ENCODE measurements at regions of chr10 and their contacts with region 1.

Region 1: DNA sequence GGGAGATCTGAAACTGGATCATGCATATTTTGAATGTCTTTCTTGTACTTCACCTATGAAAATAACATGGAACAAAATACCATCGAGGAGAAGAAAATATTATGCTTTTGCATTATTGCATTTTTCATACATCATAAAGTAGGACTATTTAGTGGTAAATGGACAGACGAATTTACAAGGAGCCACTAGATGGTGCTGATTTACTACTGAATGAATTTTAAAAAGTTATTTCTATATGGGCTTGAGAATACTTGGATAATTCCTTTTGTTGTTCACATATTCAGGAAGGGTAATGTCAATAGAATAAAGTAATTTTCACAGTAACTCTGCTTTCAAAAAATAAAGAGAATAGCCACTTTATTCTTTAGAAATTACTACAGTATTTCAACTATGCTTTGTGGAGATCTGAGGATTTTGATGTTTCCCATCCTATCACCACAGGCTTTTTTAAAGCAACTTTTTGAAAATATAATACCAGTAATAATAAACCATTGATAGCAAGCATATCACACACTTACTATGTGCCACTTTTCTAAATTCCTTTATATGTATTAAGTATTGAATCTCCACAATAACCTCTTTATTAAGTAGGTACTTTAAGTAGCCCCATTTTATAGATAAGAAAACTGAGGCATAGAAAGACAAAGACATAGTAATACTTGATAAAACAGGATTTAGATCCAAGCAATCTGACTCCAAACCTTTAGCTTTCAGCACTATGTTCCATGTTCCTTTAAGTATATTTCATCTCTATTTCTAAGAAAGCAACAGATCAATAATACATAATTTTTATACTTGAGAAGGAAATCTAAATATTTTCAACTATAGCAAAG is 38.6 kb downstream of the NEBL start:
- DNase-seq: peak; percentile 49
- H3K4me3 ChIP-seq: no peak overlapping the region
- H3K27ac ChIP-seq: no peak overlapping the region
- H3K4me1 ChIP-seq: no peaks in the 10 kb centered on the region
- H3K27me3 ChIP-seq: no peaks in the 10 kb centered on the region
- CTCF ChIP-seq: peak; percentile 21 to 36
- POLR2A ChIP-seq: no peak

Region 2: DNA sequence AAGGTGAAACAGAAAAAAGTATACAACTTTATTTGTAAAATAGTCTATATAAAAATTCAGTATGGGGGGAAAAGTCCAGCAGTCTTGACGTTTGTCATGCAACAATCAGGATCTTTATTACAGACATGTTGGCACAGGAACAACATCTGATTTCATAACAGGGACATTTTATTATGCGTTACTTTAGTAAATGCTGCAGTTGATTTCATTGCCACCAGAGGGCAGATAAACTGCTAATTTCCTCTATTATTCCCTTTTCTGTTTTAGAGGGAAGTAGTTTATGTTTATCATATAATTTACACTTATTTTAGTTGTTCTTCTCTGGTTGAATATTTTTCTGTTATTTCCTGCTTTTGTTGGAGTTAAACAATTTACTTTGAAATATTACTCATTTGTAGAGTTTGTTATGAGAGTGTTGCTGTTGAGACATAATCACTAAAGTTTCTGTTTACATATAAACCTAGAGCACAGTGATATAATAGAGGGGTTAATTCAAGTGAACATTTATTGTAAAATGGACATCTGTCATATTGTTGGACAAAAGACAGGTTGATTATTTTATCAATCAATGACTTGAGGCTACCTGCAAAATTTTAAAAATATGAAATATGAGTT is 1039.0 kb before region 1 on chr10:
- CTCF ChIA-PET with region 1: interaction called, 53 read pairs
- POLR2A ChIA-PET with region 1: no interaction called
- dilution Hi-C with region 1: no loop called
- intact Hi-C with region 1: loop called (anchors 5 kb)
- DNase-seq: peak; percentile 58
- H3K4me3 ChIP-seq: no peak overlapping the region
- H3K27ac ChIP-seq: no peak overlapping the region
- H3K4me1 ChIP-seq: peaks cover 2% of the 10 kb centered on the region
- H3K27me3 ChIP-seq: peaks cover 26 to 42% of the 10 kb centered on the region in 2 experiments
- CTCF ChIP-seq: peak; percentile 44 to 51
- POLR2A ChIP-seq: no peak

Region 3: DNA sequence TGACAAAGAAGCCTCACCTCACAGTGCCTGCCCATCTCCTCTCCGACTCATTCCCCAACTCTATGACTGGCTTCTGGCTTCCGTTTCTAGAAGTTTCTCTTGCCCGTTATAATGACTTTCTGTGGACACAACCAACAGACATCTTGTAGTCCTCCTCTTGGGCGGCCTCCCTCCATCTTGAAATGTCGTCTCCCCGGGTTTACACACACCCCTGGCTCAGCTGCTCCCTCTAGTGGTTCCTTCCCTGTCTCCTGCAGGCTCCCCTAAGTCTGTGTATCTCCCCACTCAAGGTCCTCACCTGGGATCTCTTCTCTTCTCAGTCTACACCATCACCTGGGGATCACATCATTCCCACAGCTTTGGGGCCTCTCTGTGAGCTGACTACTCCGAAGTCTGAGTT is 162.0 kb after region 1 on chr10:
- CTCF ChIA-PET with region 1: interaction called, 4 read pairs
- POLR2A ChIA-PET with region 1: no interaction called
- dilution Hi-C with region 1: no loop called
- intact Hi-C with region 1: loop called (anchors 1 kb)
- DNase-seq: peak; percentile 26
- H3K4me3 ChIP-seq: no peak overlapping the region
- H3K27ac ChIP-seq: no peak overlapping the region
- H3K4me1 ChIP-seq: no peaks in the 10 kb centered on the region
- H3K27me3 ChIP-seq: peaks cover 0 to 16% of the 10 kb centered on the region in 2 experiments
- CTCF ChIP-seq: peak; percentile 55 to 63
- POLR2A ChIP-seq: no peak

Region 4: GRCh38 chr10:21273400-21273932 is 415.0 kb after region 1 on chr10:
- CTCF ChIA-PET with region 1: interaction called, 7 read pairs
- POLR2A ChIA-PET with region 1: no interaction called
- dilution Hi-C with region 1: no loop called
- intact Hi-C with region 1: loop called (anchors 1 kb)
- DNase-seq: no peak
- H3K4me3 ChIP-seq: no peak overlapping the region
- H3K27ac ChIP-seq: no peak overlapping the region
- H3K4me1 ChIP-seq: peaks cover 3% of the 10 kb centered on the region
- H3K27me3 ChIP-seq: no peaks in the 10 kb centered on the region
- CTCF ChIP-seq: no peak
- POLR2A ChIP-seq: no peak

Region 5: DNA sequence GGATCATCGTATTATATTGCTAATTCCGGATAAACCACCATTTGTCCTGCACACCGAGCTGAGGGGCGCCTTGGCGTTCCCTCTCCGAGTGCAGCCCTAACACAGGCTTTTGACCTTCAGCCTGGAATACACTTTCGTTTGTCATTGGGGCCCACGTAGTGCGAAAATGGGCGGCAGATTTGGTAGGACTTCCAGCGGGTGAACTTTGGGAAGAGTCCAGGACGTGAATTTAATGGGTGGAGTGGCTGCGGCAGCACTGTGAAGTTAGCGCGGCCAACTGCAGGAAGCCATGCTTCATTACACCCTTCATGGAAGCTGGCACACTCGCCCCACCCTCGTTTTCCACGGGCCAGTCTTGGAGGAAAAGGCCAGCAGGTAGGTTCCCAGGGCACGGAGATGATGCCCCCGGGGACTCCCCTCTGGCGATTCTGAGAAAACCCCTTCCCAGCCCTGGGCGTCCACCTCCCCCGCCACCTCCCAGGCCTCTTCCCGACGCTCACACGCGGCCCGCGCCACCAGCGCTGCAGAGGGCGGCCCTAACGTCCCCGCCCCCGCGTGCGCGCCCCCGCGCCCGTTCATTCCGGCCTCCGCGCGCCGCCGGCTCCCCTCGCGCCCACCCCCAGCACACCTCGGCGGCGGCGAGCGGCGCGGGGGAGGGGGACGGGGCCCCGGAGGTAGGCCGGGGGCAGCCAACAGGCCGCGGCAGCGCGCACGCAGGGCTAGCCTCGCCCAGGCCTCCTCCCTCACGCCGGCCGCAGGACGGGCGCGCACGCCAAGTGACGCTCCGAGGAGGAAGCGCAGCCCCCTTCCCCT is 675.2 kb after region 1 on chr10 and contains the start of gene MLLT10:
- CTCF ChIA-PET with region 1: no interaction called
- POLR2A ChIA-PET with region 1: no interaction called
- dilution Hi-C with region 1: no loop called
- intact Hi-C with region 1: loop called (anchors 5 kb)
- DNase-seq: peak; percentile 97
- H3K4me3 ChIP-seq: peak within 1 kb of the TSS; percentile 80 to 93 (median 83)
- H3K27ac ChIP-seq: peak within 1 kb of the TSS; percentile 60
- H3K4me1 ChIP-seq: peaks cover 17% of the 10 kb centered on the region
- H3K27me3 ChIP-seq: no peaks in the 10 kb centered on the region
- CTCF ChIP-seq: no peak
- POLR2A ChIP-seq: peak; percentile 83
- total RNA-seq, gene MLLT10: 54.0 and 54.6 TPM in 2 replicates